ENCODE measurements at regions of chr3 and their contacts with region 1.

Region 1: GRCh38 chr3:9731206-9732079 is at the start of gene BRPF1:
- DNase-seq: peak; percentile 100
- H3K4me3 Mint-ChIP-seq: peak within 1 kb of the TSS; percentile 84
- H3K27ac Mint-ChIP-seq: peak within 1 kb of the TSS; percentile 95
- H3K4me1 Mint-ChIP-seq: peaks cover 59% of the 10 kb centered on the region
- H3K27me3 Mint-ChIP-seq: no peaks in the 10 kb centered on the region
- total RNA-seq, gene BRPF1: 16.8 to 19.4 TPM

Region 2: DNA sequence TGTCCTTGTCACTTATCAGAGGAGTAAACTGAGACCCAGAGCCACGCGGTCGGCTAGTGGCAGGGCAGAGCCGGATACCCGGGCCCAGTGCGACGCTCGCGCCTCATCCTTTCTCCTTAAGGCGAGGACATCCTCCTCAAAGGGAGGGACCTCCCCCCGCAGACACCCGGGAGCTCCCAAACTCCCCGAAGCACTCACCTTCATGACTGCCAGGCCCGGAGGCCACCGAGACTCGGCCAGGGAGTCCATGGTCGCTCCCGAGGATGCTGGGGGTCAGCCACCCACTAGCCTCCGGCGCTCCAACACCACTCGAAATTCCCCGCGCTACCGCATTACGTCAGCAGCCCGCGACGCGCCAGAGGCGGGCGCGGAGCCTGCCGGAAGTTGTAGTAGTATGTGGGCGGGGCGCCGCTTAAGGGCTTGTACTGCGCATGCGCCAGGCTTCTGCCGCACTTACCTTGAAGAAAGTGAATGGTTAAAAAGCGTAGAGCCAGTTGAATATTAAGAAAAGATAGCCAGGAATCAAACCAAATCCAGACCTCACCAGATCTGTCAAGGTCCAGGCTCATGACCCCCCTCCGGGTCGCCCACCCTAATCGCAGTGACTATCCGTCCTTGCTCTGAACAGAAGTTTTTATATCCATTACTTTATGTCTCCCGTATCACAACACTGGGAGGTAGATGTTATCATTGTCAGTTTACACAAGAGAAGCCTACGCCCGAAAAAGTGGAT is 768.1 kb before region 1 on chr3 and contains the start of gene RAD18:
- CTCF ChIA-PET with region 1: no interaction called
- intact Hi-C with region 1: loop called (anchors 1 kb)
- DNase-seq: peak; percentile 95
- H3K4me3 Mint-ChIP-seq: peak within 1 kb of the TSS; percentile 97
- H3K27ac Mint-ChIP-seq: peak within 1 kb of the TSS; percentile 94
- H3K4me1 Mint-ChIP-seq: peaks cover 35% of the 10 kb centered on the region
- H3K27me3 Mint-ChIP-seq: no peaks in the 10 kb centered on the region
- total RNA-seq, gene RAD18: 44.5 to 45.4 TPM

Region 3: GRCh38 chr3:9503283-9503682 is 228.2 kb before region 1 on chr3:
- CTCF ChIA-PET with region 1: interaction called, 13 read pairs
- intact Hi-C with region 1: loop called (anchors 1 kb)
- DNase-seq: peak; percentile 83
- H3K4me3 Mint-ChIP-seq: no peak overlapping the region
- H3K27ac Mint-ChIP-seq: no peak overlapping the region
- H3K4me1 Mint-ChIP-seq: peaks cover 6% of the 10 kb centered on the region
- H3K27me3 Mint-ChIP-seq: peaks cover 24% of the 10 kb centered on the region

Region 4: GRCh38 chr3:9659849-9660248 is 71.6 kb before region 1 on chr3:
- CTCF ChIA-PET with region 1: no interaction called
- intact Hi-C with region 1: no loop called
- DNase-seq: no peak
- H3K4me3 Mint-ChIP-seq: no peak overlapping the region
- H3K27ac Mint-ChIP-seq: no peak overlapping the region
- H3K4me1 Mint-ChIP-seq: peaks cover 8% of the 10 kb centered on the region
- H3K27me3 Mint-ChIP-seq: no peaks in the 10 kb centered on the region

Region 5: GRCh38 chr3:9749645-9750555 is 18.5 kb after region 1 on chr3 and contains the start of gene OGG1:
- CTCF ChIA-PET with region 1: interaction called, 6 read pairs
- intact Hi-C with region 1: loop called (anchors 1 kb)
- DNase-seq: peak; percentile 98
- H3K4me3 Mint-ChIP-seq: peak within 1 kb of the TSS; percentile 97
- H3K27ac Mint-ChIP-seq: peak within 1 kb of the TSS; percentile 94
- H3K4me1 Mint-ChIP-seq: peaks cover 50% of the 10 kb centered on the region
- H3K27me3 Mint-ChIP-seq: no peaks in the 10 kb centered on the region
- total RNA-seq, gene OGG1: 26.1 to 28.5 TPM

Region 6: DNA sequence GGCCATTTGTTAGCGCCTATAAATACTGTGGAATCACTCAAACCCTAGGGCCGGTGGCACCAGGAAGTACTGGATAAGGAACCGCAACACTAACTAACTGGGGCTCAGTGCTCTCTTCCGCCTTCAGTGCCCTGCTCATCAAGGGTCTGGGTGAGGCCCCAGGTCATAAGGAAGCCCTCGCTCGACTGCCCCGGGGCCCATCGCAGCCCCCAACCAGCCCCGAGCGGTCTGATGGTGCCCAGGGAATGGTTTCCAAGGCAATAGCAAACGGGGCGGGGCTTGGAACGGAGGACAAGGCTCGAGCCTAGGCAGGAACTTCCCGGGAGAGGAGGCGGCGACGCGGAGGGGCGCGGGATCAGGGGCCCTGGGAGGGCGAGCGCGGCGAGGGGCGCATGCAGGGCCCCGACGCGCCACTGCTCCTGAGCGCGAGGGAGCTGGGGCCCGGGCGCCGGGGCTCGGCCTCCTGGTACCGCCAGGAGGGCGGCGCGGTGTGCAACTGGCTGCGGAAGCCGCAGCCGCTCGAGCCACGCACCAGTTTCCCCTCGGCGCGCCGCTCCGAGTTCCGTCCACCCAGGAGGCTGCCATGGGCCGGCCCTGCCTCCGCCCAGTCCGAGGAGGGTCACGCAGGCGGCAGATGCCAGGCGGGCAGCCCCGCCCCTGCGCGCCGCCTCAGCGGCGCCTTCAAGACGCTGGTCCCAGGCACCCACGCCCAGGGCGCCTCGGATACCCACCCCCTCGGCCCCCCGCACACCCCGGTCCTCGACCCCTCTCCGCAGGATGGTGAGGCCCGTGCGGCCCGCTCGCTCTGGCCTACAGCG is 78.4 kb after region 1 on chr3 and contains the start of gene TTLL3:
- CTCF ChIA-PET with region 1: interaction called, 7 read pairs
- intact Hi-C with region 1: loop called (anchors 1 kb)
- DNase-seq: peak; percentile 38
- H3K4me3 Mint-ChIP-seq: peak within 1 kb of the TSS; percentile 81
- H3K27ac Mint-ChIP-seq: peak within 1 kb of the TSS; percentile 92
- H3K4me1 Mint-ChIP-seq: peaks cover 32% of the 10 kb centered on the region
- H3K27me3 Mint-ChIP-seq: no peaks in the 10 kb centered on the region
- total RNA-seq, gene TTLL3: 46.3 to 47.1 TPM

Region 7: GRCh38 chr3:9986237-9986725 is 254.8 kb after region 1 on chr3:
- CTCF ChIA-PET with region 1: interaction called, 3 read pairs
- intact Hi-C with region 1: loop called (anchors 5 kb)
- DNase-seq: no peak
- H3K4me3 Mint-ChIP-seq: peak overlapping the region; percentile 97
- H3K27ac Mint-ChIP-seq: peak overlapping the region; percentile 99
- H3K4me1 Mint-ChIP-seq: peaks cover 39% of the 10 kb centered on the region
- H3K27me3 Mint-ChIP-seq: no peaks in the 10 kb centered on the region